ENCODE measurements at regions of chr2 and their contacts with region 1.

Region 1: GRCh38 chr2:178796079-178796677 is 11.0 kb downstream of the TTN start:
- DNase-seq: no peak
- ATAC-seq: peak; percentile 48
- H3K4me3 ChIP-seq: no peak overlapping the region
- H3K27ac ChIP-seq: no peak overlapping the region
- H3K4me1 ChIP-seq: no peaks in the 10 kb centered on the region
- H3K27me3 ChIP-seq: no peaks in the 10 kb centered on the region
- CTCF ChIP-seq: peak in 6 of 7 experiments; percentile 52 to 80 (median 75)
- POLR2A ChIP-seq: no peak

Region 2: DNA sequence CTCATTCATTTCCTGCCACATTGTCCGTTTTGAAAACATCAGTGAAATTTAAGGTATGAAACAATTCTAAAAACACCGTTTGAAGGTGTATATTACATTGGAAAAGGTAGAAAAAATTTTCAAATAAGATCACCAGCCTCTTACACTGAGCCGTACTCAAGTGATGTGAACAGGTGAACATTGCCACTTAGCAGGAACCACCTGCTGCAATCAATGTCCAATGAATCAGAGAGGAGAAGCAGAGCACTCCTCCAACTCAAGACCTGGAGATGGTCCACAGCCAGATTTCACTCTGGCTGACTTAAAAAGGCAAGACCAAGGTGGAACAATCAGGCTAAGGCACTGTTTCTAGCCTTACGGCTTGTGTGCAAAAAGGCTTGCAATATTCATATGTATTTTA is 121.4 kb after region 1 on chr2:
- intact Hi-C with region 1: loop called (anchors 5 kb)
- DNase-seq: no peak
- ATAC-seq: no peak
- H3K4me3 ChIP-seq: no peak overlapping the region
- H3K27ac ChIP-seq: no peak overlapping the region
- H3K4me1 ChIP-seq: peaks cover 3% of the 10 kb centered on the region
- H3K27me3 ChIP-seq: no peaks in the 10 kb centered on the region
- CTCF ChIP-seq: no peak
- POLR2A ChIP-seq: no peak

Region 3: DNA sequence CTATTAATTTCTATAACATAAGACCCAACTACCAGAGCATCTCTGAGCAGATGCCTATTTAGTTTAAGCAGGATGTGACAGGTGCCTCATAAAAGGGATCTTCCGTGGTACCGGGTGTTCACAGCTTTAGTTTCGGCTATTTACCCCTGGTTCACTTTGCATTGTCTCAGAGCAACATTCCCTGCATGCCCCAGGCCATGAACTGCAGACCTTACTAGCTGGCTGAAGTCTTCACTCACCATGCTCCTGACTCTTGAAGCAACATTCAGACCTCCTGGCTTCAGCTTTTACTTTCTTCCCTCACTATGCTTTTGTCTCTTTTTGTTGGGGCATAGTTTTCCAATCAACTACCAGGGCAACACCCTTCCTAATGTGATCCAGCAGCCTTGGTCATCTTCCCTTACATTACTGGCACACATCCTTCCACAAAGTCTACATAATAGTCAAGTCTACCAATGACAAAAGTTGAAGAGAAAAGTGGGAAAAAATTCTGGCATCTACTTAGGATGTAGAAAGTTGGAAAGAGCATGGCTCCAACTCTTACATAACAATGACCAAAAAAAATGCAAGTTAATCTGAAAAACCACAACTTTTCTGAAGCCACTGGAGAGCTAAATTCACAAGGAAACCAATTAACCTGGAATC is 369.3 kb after region 1 on chr2:
- intact Hi-C with region 1: no loop called
- DNase-seq: no peak
- ATAC-seq: no peak
- H3K4me3 ChIP-seq: no peak overlapping the region
- H3K27ac ChIP-seq: no peak overlapping the region
- H3K4me1 ChIP-seq: no peaks in the 10 kb centered on the region
- H3K27me3 ChIP-seq: no peaks in the 10 kb centered on the region
- CTCF ChIP-seq: no peak
- POLR2A ChIP-seq: no peak

Measured in body of pancreas (tissue), 4 donors.